ENCODE measurements at regions of chr4 and their contacts with region 1.

Region 1: GRCh38 chr4:88033309-88033708 is 25.9 kb downstream of the PKD2 start:
- DNase-seq: peak; percentile 59 to 76 (median 64)
- ATAC-seq: peak; percentile 71
- H3K4me3 ChIP-seq: no peak overlapping the region
- H3K27ac ChIP-seq: no peak overlapping the region
- H3K4me1 ChIP-seq: no peaks in the 10 kb centered on the region
- H3K27me3 ChIP-seq: no peaks in the 10 kb centered on the region
- CTCF ChIP-seq: peak; percentile 41 to 86 (median 82)
- POLR2A ChIP-seq: no peak

Region 2: DNA sequence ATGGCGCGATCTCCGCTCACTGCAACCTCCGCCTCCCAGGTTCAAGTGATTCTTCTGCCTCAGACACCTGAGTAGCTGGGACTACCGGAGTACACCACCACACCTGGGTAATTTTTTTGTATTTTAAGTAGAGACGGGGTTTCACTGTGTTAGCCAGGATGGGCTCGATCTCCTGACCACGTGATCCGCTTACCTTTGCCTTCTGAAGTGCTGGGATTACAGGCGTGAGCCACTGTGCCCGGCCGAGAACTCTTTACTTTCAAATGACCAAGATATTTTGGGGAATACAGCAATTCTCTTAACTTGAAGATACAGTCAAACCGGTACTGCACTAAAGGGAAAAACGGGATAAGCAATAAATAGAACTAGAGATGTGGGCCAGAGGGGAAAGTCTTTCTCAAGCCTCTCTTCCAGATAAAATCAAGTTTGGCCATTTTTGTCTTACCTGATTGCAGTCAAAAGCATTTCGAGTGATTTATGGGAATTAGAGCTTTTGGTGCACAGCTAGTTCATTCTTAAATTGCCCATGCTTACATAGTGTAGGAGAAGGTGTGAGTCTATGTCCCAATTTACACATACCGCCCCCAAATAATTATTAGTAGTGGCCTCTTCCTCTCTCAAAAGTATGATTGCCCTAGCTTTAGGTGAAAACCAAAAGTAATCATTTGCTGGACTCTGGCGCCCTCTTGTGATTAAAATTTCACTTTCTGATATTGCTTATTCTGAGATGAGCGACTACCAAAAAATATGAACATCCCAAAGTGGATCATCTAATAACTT is 178.4 kb after region 1 on chr4:
- intact Hi-C with region 1: loop called (anchors 5 kb)
- DNase-seq: peak; percentile 28 to 57 (median 40)
- ATAC-seq: no peak
- H3K4me3 ChIP-seq: no peak overlapping the region
- H3K27ac ChIP-seq: no peak overlapping the region
- H3K4me1 ChIP-seq: peaks cover 8% of the 10 kb centered on the region
- H3K27me3 ChIP-seq: no peaks in the 10 kb centered on the region
- CTCF ChIP-seq: peak; percentile 65 to 89 (median 78)
- POLR2A ChIP-seq: no peak

Region 3: DNA sequence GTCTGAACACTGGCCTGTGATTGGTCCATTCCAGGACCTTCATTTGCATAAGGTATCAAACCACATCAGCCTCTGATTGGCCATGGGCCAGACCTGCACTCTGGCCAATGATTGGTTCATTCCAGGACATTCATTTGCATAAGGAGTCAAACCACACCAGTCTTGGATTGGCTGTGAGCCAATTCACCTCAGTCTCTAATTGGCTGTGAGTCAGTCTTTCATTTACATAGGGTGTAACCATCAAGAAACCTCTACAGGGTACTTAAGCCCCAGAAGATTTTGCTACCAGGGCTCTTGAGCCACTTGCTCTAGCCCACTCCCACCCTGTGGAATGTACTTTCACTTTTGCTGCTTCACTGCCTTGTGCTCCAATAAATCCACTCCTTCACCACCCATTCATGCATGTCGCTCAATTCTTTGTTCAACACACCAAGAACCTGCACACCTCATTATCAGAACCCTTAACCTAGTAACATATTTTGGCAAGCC is 409.4 kb after region 1 on chr4:
- intact Hi-C with region 1: no loop called
- DNase-seq: no peak
- ATAC-seq: no peak
- H3K4me3 ChIP-seq: no peak overlapping the region
- H3K27ac ChIP-seq: no peak overlapping the region
- H3K4me1 ChIP-seq: no peaks in the 10 kb centered on the region
- H3K27me3 ChIP-seq: no peaks in the 10 kb centered on the region
- CTCF ChIP-seq: no peak
- POLR2A ChIP-seq: no peak